H1 (cell line): ENCODE measurements at regions of chr5 and their contacts with region 1.

Region 1: GRCh38 chr5:3590967-3591900 is 4.4 kb upstream of the IRX1 start:
- DNase-seq: peak in 1 of 2 experiments; percentile 67
- H3K4me3 ChIP-seq: peak overlapping the region; percentile 22 to 55 (median 44); a peak in 7 of 8 replicates
- H3K27ac ChIP-seq: no peak overlapping the region
- H3K4me1 ChIP-seq: peaks cover 0 to 31% (median 17%) of the 10 kb centered on the region in 4 experiments; a peak in 6 of 7 replicates
- H3K27me3 ChIP-seq: peaks cover 63 to 88% (median 73%) of the 10 kb centered on the region in 4 experiments
- CTCF ChIP-seq: peak in 1 of 3 experiments; percentile 12; a peak in 1 of 4 replicates
- EP300 ChIP-seq: no peak
- POLR2A ChIP-seq: no peak
- RAD21 ChIP-seq: peak in 1 of 2 experiments; percentile 19; a peak in 1 of 4 replicates

Region 2: DNA sequence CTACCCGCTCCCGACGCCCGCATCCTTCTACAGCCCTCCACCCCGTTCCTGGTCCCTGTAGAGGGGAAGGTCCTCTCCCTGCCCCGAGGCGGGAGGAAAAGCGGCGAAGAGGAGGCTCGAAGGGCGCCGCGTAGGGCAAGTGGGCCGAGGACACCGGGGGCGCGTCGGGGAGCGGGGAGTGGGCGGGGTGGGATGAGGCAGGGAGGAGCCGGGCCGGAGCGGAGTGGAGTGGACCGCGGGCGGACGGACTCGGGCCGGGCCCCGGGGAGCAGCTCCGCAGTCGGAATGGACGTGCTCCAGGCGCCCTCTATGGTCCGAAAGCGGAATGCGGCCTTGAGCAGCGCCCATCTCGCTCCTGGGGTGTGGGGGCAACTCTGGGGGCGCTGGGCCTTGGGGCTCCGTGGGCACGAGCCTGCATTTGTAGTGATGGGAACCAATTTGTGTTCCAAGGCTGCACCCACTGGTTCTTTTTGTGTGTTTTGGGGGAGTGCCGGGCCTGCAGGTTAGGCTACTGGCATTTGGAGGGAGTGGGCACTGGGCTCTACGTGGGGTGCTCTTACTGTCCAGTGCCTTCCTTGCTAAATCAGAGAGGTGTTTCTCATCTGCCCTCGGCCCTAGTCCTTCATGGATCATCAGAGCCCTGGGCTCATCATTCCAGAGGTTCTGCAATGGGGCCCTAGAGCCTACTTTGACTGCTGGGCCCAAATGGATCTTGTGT is 11.7 kb after region 1 on chr5:
- CTCF ChIA-PET with region 1: interaction called, 15 read pairs
- POLR2A ChIA-PET with region 1: interaction called, 5 read pairs
- DNase-seq: peak in 1 of 2 experiments; percentile 87
- H3K4me3 ChIP-seq: peak overlapping the region; percentile 24 to 69 (median 34); a peak in 7 of 8 replicates
- H3K27ac ChIP-seq: no peak overlapping the region
- H3K4me1 ChIP-seq: peaks cover 0 to 25% (median 16%) of the 10 kb centered on the region in 4 experiments; a peak in 6 of 7 replicates
- H3K27me3 ChIP-seq: peaks cover 61 to 96% (median 82%) of the 10 kb centered on the region in 4 experiments
- CTCF ChIP-seq: peak in 2 of 3 experiments; percentile 59 to 64; a peak in 3 of 4 replicates
- EP300 ChIP-seq: no peak
- POLR2A ChIP-seq: no peak
- RAD21 ChIP-seq: peak; percentile 67 to 72